Gastrocnemius medialis (tissue), 4 donors: ENCODE measurements at regions of chr1 and their contacts with region 1.

Region 1: GRCh38 chr1:207052911-207053769 is at the start of gene PFKFB2:
- DNase-seq: peak; percentile 97 to 98
- ATAC-seq: peak; percentile 70 to 73
- H3K4me3 ChIP-seq: peak within 1 kb of the TSS; percentile 74 to 82 (median 76)
- H3K27ac ChIP-seq: peak within 1 kb of the TSS; percentile 93 to 95 (median 94)
- H3K4me1 ChIP-seq: peaks cover 29 to 50% of the 10 kb centered on the region in 2 donors
- H3K27me3 ChIP-seq: no peaks in the 10 kb centered on the region
- CTCF ChIP-seq: peak; percentile 42 to 58 (median 52)
- POLR2A ChIP-seq: peak; percentile 98
- total RNA-seq, gene PFKFB2: 35.5 to 40.3 (median 37.6) TPM

Region 2: GRCh38 chr1:206507284-206508129 is 545.6 kb before region 1 on chr1 and contains the start of gene RASSF5:
- in situ Hi-C with region 1: no loop called
- intact Hi-C with region 1: loop called (anchors 10 kb)
- DNase-seq: peak; percentile 45 to 84
- ATAC-seq: peak; percentile 53 to 62
- H3K4me3 ChIP-seq: peak within 1 kb of the TSS; percentile 55 to 78 (median 68)
- H3K27ac ChIP-seq: peak within 1 kb of the TSS in 3 of 4 donors; percentile 37 to 64 (median 61)
- H3K4me1 ChIP-seq: peaks cover 24 to 36% of the 10 kb centered on the region in 2 donors
- H3K27me3 ChIP-seq: peaks cover 13 to 26% (median 19%) of the 10 kb centered on the region in 3 donors
- CTCF ChIP-seq: no peak
- POLR2A ChIP-seq: peak; percentile 32 to 75
- total RNA-seq, gene RASSF5: 5.9 to 15.9 (median 9.4) TPM

Region 3: GRCh38 chr1:206890690-206891089 is 162.4 kb before region 1 on chr1:
- in situ Hi-C with region 1: no loop called
- intact Hi-C with region 1: loop called (anchors 5 kb)
- DNase-seq: no peak
- ATAC-seq: peak in 1 of 2 donors; percentile 34
- H3K4me3 ChIP-seq: peak overlapping the region in 1 of 4 donors; percentile 27
- H3K27ac ChIP-seq: no peak overlapping the region
- H3K4me1 ChIP-seq: peaks cover 17 to 25% of the 10 kb centered on the region in 2 donors
- H3K27me3 ChIP-seq: no peaks in the 10 kb centered on the region
- CTCF ChIP-seq: no peak
- POLR2A ChIP-seq: no peak

Region 4: DNA sequence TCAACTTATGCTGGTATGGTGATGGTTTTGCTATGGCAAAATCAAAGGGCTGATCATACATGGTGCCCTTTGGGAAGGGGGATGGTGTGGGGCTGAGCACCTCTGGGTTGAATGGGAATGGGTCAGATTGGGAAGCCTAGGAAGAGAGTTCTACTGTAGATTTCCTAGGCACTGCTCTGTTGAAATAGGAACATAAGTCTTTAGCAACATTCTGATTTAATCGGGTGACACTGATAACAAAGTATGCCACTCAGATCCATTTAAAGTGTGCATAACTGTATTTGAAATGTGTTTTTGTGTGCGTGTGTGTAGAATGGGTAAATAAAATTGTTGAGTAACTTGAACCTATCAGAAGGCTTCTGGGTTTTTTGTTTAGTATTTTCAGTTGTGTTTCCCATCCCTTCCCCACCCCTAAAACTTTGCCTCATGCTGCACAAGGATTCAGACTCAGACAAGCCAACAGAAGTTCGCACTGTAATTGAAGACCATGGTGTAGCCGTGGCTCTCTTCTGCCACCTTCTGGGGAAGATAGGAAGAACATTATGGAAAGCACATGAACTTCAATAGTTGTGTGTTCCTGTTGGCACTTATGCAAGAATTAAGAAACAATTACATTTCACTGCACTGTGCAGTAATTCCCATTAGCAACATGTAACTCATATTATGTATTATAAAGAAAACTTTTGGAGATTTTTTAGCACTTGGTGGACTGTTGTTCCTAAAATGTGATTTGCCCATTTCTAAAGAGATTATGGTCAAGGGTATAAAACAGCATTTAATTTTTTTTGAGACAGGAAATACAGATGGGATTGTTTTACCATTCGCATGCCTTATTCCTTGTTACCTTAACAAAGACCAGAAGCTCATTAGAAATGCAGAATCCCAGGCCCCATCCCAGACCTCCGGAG is 24.6 kb after region 1 on chr1:
- in situ Hi-C with region 1: no loop called
- intact Hi-C with region 1: loop called (anchors 1 kb)
- DNase-seq: peak; percentile 46 to 62
- ATAC-seq: peak; percentile 88 to 91
- H3K4me3 ChIP-seq: no peak overlapping the region
- H3K27ac ChIP-seq: peak overlapping the region; percentile 4 to 72 (median 36)
- H3K4me1 ChIP-seq: peaks cover 16 to 20% of the 10 kb centered on the region in 2 donors
- H3K27me3 ChIP-seq: no peaks in the 10 kb centered on the region
- CTCF ChIP-seq: peak; percentile 78 to 94 (median 85)
- POLR2A ChIP-seq: no peak

Region 5: GRCh38 chr1:207321079-207321789 is 268.1 kb after region 1 on chr1 and contains the start of gene CD55:
- in situ Hi-C with region 1: no loop called
- intact Hi-C with region 1: loop called (anchors 5 kb)
- DNase-seq: peak; percentile 97 to 98
- ATAC-seq: peak; percentile 89 to 91
- H3K4me3 ChIP-seq: peak within 1 kb of the TSS; percentile 82 to 99 (median 95)
- H3K27ac ChIP-seq: peak within 1 kb of the TSS; percentile 96 to 100 (median 98)
- H3K4me1 ChIP-seq: peaks cover 17 to 22% of the 10 kb centered on the region in 2 donors
- H3K27me3 ChIP-seq: no peaks in the 10 kb centered on the region
- CTCF ChIP-seq: peak in 3 of 5 experiments; percentile 30 to 32 (median 31)
- POLR2A ChIP-seq: peak; percentile 96 to 97
- total RNA-seq, gene CD55: 75.2 to 428 (median 110) TPM

Region 6: GRCh38 chr1:207797229-207797961 is 744.3 kb after region 1 on chr1:
- in situ Hi-C with region 1: loop called in 1 of 4 experiments (anchors 25 kb)
- intact Hi-C with region 1: no loop called
- DNase-seq: peak; percentile 67 to 87
- ATAC-seq: peak; percentile 68 to 73
- H3K4me3 ChIP-seq: no peak overlapping the region
- H3K27ac ChIP-seq: peak overlapping the region; percentile 72 to 100 (median 86)
- H3K4me1 ChIP-seq: peaks cover 3 to 34% of the 10 kb centered on the region in 2 donors
- H3K27me3 ChIP-seq: no peaks in the 10 kb centered on the region
- CTCF ChIP-seq: peak; percentile 76 to 85 (median 81)
- POLR2A ChIP-seq: no peak